Ovary (tissue), 10 donors: ENCODE measurements at regions of chr18 and their contacts with region 1.

Region 1: DNA sequence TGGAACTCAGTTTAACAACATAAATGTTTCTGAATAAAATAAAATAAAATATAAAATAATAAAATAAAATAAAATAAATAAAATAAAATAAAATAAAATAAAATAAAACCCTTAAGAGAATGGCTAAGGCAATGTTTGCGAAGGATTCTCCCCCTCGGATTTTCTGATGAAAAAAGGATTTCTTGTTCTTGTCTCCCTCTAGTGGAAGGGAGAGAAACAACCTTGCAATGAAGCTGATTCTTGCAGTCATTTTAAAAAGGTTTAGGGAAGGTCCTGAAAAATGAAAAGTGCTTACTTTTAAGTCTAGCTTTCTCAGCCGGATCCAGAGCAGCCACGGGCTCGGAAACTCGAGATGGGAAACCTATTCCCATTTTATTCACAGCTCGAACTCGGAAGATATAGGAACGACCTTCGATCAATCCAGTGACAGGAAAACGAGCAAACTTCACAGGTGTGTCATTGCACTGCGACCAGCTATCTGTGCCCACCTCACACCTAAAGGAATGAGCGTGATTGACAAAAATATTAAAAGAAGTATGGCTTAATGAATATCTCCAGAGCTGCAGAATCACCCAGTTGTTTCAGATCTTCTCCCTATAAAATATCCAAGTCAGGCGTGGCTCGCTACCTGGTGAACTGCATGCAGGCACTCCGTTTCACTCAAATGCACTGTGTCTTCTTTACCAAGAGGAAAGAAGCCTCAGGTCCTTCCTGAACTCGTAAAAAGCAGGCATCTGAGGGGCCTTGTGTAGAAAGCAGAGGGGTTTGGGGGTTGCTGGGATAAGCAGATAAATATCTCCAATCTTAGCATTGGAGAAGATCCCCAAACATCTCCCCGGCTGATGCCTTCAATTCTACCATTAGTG is 68.1 kb downstream of the MYOM1 start:
- DNase-seq: no peak
- H3K4me3 ChIP-seq: no peak overlapping the region
- H3K27ac ChIP-seq: no peak overlapping the region
- H3K4me1 ChIP-seq: no peaks in the 10 kb centered on the region
- H3K27me3 ChIP-seq: no peaks in the 10 kb centered on the region
- CTCF ChIP-seq: peak; percentile 34 to 53 (median 41)
- EP300 ChIP-seq: no peak
- POLR2A ChIP-seq: no peak

Region 2: DNA sequence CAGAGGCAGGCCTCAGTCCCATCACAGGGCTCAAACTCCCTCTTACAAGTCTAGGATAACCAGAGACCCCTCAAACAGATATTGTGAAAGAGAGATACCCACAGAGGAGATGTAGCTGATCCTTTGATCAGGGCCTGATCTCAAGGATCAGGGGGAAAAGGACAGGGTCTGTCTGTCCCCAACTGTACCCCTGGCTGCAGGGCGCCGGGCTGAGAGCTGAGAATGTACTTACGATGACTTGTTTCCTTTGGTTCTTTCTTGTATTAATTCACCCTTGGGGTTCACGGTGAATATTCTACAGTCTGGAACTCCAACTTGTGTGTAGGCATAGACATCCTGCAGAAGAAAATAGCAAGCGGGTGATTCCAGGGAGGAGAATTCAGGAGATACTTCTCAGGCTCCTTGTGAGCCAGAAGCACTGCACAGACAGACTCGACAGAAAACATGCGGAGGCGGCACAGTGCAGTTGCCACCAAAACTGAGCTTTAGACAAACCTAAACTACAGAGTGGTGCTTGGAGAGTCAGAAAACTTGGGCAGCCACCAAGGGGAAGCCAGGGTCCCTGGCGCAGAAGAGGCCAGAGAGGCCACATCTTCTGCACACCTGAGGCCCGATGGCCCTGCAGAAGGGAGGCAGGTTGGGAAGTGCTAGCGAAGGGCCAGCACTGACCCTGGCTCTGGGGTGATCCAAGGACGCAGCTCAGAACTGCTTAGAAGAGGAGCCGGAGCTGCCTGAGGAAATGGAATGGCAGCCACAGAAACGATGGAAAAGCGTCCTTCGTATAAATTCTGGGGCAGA is 230.9 kb before region 1 on chr18:
- intact Hi-C with region 1: loop called in 1 of 4 experiments (anchors 5 kb)
- DNase-seq: no peak
- H3K4me3 ChIP-seq: no peak overlapping the region
- H3K27ac ChIP-seq: no peak overlapping the region
- H3K4me1 ChIP-seq: peaks cover 7% of the 10 kb centered on the region
- H3K27me3 ChIP-seq: no peaks in the 10 kb centered on the region
- CTCF ChIP-seq: no peak
- EP300 ChIP-seq: no peak
- POLR2A ChIP-seq: no peak

Region 3: GRCh38 chr18:2932247-2933181 is 219.1 kb before region 1 on chr18:
- intact Hi-C with region 1: loop called in 2 of 4 experiments (anchors 5 to 10 kb)
- DNase-seq: peak in 2 of 5 donors; percentile 33 to 53
- H3K4me3 ChIP-seq: no peak overlapping the region
- H3K27ac ChIP-seq: no peak overlapping the region
- H3K4me1 ChIP-seq: no peaks in the 10 kb centered on the region
- H3K27me3 ChIP-seq: no peaks in the 10 kb centered on the region
- CTCF ChIP-seq: peak; percentile 60 to 91 (median 75)
- EP300 ChIP-seq: no peak
- POLR2A ChIP-seq: no peak

Region 4: DNA sequence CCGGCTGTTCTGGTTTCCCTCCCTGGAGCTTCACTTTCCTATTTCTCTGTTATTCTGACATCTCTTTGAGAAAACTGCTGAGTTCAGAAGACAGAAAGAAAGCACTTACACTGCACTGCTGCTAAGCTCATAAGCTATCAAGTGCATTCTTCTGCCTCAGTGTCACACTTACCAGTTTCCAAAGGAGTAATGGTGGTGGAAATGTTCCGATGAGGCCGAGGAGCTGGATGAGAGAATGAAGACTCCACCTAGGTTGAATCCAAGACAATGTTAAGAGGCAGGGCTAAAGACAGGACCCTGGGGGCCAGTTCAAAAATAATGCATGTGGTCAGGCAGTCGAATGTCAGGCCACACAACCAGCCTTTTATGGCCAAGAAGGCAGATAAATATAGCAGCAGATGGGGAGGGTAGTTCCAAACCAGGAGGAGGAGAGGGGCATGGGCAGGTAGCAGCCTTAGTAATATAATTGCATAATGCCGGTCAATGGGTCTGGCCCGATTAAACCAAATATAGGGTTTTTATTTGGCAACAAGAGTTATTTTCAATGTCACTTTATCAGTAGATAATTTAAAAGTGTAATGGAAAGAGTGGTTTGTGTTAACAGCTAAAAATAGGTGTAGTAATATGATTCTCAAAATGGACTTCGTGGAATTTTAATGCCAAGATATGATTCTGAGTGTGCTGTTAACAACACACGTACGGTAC is 68.2 kb after region 1 on chr18 and contains the start of gene MYOM1:
- intact Hi-C with region 1: loop called in 1 of 4 experiments (anchors 10 kb)
- DNase-seq: no peak
- H3K4me3 ChIP-seq: peak within 1 kb of the TSS; percentile 12
- H3K27ac ChIP-seq: no peak within 1 kb of the TSS
- H3K4me1 ChIP-seq: no peaks in the 10 kb centered on the region
- H3K27me3 ChIP-seq: no peaks in the 10 kb centered on the region
- CTCF ChIP-seq: no peak
- EP300 ChIP-seq: no peak
- POLR2A ChIP-seq: no peak
- total RNA-seq, gene MYOM1: 0.69 to 7.3 (median 3.6) TPM

Region 5: GRCh38 chr18:3245853-3246634 is 94.4 kb after region 1 on chr18:
- intact Hi-C with region 1: loop called in 1 of 4 experiments (anchors 10 kb)
- DNase-seq: peak; percentile 84 to 91 (median 84)
- H3K4me3 ChIP-seq: peak overlapping the region; percentile 99
- H3K27ac ChIP-seq: peak overlapping the region; percentile 87 to 93
- H3K4me1 ChIP-seq: peaks cover 4% of the 10 kb centered on the region
- H3K27me3 ChIP-seq: no peaks in the 10 kb centered on the region
- CTCF ChIP-seq: peak; percentile 47 to 93 (median 80)
- EP300 ChIP-seq: no peak
- POLR2A ChIP-seq: peak; percentile 15